ENCODE measurements at regions of chr22 and their contacts with region 1.

Region 1: DNA sequence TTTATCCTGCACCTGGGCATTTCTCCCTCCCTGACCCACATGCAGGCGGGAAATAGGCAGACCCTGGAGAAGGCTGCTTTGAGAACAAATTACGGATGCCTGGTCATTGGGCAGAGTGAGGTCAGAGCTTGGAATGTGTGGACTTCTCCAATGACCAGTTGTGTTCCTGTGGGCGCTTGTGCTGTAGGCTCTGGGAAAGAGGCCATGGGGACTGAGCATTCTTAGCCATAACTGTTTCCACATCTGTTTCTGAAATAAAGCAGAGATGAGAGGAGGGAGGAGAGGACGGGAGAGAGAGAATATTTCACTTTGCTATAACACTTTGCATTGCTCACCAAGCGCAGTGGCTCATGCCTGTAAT is 11.2 kb upstream of the TMEM184B start:
- DNase-seq: peak in 1 of 2 donors; percentile 92
- H3K4me3 ChIP-seq: no peak overlapping the region
- H3K27ac ChIP-seq: peak overlapping the region; percentile 71 to 95
- H3K4me1 ChIP-seq: peaks cover 3 to 15% of the 10 kb centered on the region in 2 donors
- H3K27me3 ChIP-seq: no peaks in the 10 kb centered on the region
- CTCF ChIP-seq: no peak

Region 2: DNA sequence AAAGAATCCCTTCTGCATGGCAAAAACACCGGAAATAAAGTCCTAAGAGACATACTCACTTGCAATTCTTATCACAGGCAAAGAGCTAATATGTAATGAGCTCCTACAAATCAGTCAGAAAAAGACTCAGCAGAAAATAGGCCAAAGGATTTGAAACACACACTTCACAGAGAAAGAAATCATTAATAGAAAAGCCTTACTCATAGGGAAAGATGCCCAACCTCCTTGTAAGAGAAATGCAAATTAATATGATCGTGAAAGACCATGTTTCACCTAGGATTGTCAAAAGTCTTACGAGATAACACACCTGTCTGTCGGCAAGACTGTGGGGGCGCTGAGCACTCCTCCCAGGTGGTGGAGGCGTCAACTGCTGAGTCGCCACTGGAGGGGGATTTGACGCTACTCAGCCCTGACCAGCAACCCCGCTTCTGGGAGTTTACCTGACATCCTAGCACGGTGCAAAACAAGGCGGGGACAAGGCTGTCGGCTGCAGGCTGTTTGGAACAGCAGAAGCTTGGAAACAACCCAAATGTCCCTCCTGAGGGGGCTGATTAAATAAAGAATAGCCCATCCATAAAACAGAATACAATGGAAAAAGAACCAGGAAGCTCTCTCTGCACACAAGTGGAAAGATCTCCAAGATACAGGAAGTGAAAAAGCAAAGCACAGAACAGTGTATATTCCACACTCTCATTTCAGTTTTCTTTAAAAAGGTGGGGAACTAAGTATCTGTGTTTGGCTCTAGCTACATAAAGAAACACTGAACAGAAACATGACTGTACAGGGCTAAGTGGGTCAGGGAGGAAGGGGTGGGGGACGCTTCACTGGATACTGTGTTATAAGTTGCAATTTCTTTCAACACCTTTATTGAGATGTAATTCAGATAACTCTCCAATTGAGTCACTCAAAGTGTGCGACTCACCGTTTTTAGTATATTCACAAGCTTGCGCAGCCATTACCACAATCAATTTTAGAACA is 21.7 kb after region 1 on chr22:
- intact Hi-C with region 1: loop called (anchors 2 kb)
- DNase-seq: no peak
- H3K4me3 ChIP-seq: peak overlapping the region in 1 of 2 donors; percentile 17
- H3K27ac ChIP-seq: peak overlapping the region; percentile 78 to 79
- H3K4me1 ChIP-seq: peaks cover 28 to 59% of the 10 kb centered on the region in 2 donors
- H3K27me3 ChIP-seq: no peaks in the 10 kb centered on the region
- CTCF ChIP-seq: no peak

Region 3: GRCh38 chr22:38429499-38430068 is 145.6 kb after region 1 on chr22:
- intact Hi-C with region 1: no loop called
- DNase-seq: no peak
- H3K4me3 ChIP-seq: no peak overlapping the region
- H3K27ac ChIP-seq: no peak overlapping the region
- H3K4me1 ChIP-seq: no peaks in the 10 kb centered on the region
- H3K27me3 ChIP-seq: no peaks in the 10 kb centered on the region
- CTCF ChIP-seq: no peak